A549 (cell line): ENCODE measurements at regions of chr10 and their contacts with region 1.

Region 1: DNA sequence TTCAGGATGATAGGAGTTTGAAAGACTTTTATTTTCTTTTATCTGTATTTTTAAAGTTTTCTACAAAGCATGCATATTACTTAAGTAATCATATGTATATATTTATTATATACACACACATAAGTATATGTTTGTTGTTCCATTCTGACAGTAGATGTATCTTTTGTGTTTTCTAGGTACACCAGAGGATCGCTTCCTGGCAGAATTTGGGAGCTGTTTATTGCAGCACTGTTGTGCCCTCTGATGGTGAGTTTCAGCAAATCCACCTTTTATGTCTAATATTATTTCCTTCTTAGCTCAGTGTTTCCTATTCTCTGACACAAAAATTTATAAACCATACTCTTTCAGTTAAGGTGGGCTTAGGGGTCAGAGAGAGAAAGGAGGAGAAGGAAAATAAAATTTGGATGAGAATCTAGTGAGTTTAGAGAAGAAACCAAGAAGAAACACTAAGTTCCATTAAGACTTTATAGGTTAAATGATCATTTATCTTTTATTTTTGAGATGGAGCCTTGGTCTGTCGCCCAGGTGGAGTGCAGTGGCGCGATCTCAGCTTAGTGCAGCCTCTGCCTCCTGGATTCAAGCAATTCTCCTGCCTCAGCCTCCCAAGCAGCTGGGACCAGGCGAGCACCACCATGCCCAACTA is 59.2 kb upstream of the OIT3 start:
- DNase-seq: peak; percentile 29 to 76
- ATAC-seq: peak; percentile 68 to 81; a peak in 4 of 6 replicates
- H3K4me3 ChIP-seq: no peak overlapping the region
- H3K27ac ChIP-seq: no peak overlapping the region
- H3K4me1 ChIP-seq: peaks cover 46% of the 10 kb centered on the region
- CTCF ChIP-seq: peak; percentile 91
- EP300 ChIP-seq: no peak
- POLR2A ChIP-seq: no peak
- RAD21 ChIP-seq: peak; percentile 94

Region 2: DNA sequence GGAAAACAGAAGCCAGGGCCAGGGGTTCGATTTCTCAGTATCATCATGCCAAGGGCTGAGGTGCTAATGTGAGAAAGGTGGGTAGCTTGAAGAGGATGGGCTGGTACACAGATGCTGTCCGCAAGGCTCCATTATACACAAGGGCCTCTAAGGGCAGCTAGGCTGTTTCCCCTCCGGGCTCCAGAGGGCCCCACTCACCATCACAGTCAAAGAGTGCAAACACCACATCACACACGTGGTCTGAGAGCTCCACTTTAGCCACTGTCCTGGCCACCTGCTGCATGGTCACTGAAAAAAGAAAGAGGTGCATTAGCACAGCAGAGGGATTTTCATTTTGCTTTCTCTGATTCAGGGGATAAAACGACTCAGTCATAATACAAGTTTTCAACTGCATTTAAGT is 458.7 kb before region 1 on chr10:
- CTCF ChIA-PET with region 1: interaction called, 10 read pairs
- POLR2A ChIA-PET with region 1: no interaction called
- DNase-seq: peak in 1 of 2 experiments; percentile 40
- ATAC-seq: peak; percentile 74 to 90
- H3K4me3 ChIP-seq: no peak overlapping the region
- H3K27ac ChIP-seq: no peak overlapping the region
- H3K4me1 ChIP-seq: no peaks in the 10 kb centered on the region
- CTCF ChIP-seq: 0 out of 3 replicates have a peak, but pooled peaks have one; percentile 17
- EP300 ChIP-seq: no peak
- POLR2A ChIP-seq: no peak
- RAD21 ChIP-seq: peak in 1 of 2 experiments; percentile 49; a peak in 3 of 5 replicates

Region 3: DNA sequence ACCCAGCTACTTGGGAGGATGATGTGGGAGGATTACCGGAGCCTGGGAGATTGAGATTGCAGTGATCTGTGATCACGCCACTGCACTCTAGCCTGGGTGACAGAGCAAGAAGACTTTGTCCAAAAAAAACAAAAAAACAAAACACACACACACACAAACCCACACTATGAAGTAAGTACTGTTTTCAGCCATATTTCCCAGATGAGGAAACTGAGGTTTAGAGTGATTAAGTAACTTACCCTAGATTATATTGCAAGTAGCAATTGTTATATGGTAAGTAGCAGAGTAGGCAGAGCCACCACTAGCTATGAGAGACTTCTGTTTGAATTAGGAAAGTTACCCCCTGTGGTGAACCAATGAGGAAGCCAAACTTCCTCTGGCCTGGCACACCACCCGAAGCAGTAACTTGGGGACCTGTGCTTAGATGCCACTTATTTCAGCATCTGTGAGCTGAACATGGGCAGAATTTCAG is 80.5 kb before region 1 on chr10:
- CTCF ChIA-PET with region 1: no interaction called
- POLR2A ChIA-PET with region 1: no interaction called
- DNase-seq: no peak
- ATAC-seq: peak in 1 of 2 experiments; percentile 25; a peak in 1 of 6 replicates
- H3K4me3 ChIP-seq: no peak overlapping the region
- H3K27ac ChIP-seq: no peak overlapping the region
- H3K4me1 ChIP-seq: peaks cover 14% of the 10 kb centered on the region; the same call in 2 of the 3 replicates
- CTCF ChIP-seq: no peak
- EP300 ChIP-seq: no peak
- POLR2A ChIP-seq: no peak
- RAD21 ChIP-seq: no peak

Region 4: GRCh38 chr10:72846225-72846624 is 11.9 kb after region 1 on chr10:
- CTCF ChIA-PET with region 1: interaction called, 13 read pairs
- POLR2A ChIA-PET with region 1: no interaction called
- DNase-seq: peak; percentile 52 to 64
- ATAC-seq: peak; percentile 94 to 99
- H3K4me3 ChIP-seq: no peak overlapping the region
- H3K27ac ChIP-seq: peak overlapping the region; percentile 59 to 85
- H3K4me1 ChIP-seq: peaks cover 22% of the 10 kb centered on the region
- CTCF ChIP-seq: no peak
- EP300 ChIP-seq: no peak
- POLR2A ChIP-seq: no peak
- RAD21 ChIP-seq: no peak